ENCODE measurements at regions of chr9 and their contacts with region 1.

Region 1: GRCh38 chr9:72364679-72365524 is at the start of gene ZFAND5:
- DNase-seq: peak; percentile 96 to 97 (median 97)
- H3K4me3 ChIP-seq: peak within 1 kb of the TSS; percentile 77 to 100 (median 98)
- H3K4me3 Mint-ChIP-seq: peak within 1 kb of the TSS; percentile 95 to 96
- H3K27ac ChIP-seq: peak within 1 kb of the TSS; percentile 97 to 100
- H3K27ac Mint-ChIP-seq: peak within 1 kb of the TSS; percentile 100
- H3K4me1 ChIP-seq: peaks cover 27 to 35% of the 10 kb centered on the region in 2 donors
- H3K4me1 Mint-ChIP-seq: peaks cover 20% of the 10 kb centered on the region
- H3K27me3 ChIP-seq: no peaks in the 10 kb centered on the region
- H3K27me3 Mint-ChIP-seq: peaks cover 0 to 4% (median 0%) of the 10 kb centered on the region in 3 donors
- CTCF ChIP-seq: no peak
- polyA plus RNA-seq, gene ZFAND5: 199 to 702 (median 237) TPM

Region 2: GRCh38 chr9:72292256-72292682 is 72.6 kb before region 1 on chr9:
- intact Hi-C with region 1: loop called in 1 of 2 experiments (anchors 2 kb)
- DNase-seq: peak; percentile 38 to 68 (median 53)
- H3K4me3 ChIP-seq: peak overlapping the region in 2 of 3 experiments; percentile 27 to 50
- H3K4me3 Mint-ChIP-seq: peak overlapping the region; percentile 1 to 56
- H3K27ac ChIP-seq: peak overlapping the region; percentile 1 to 85
- H3K27ac Mint-ChIP-seq: peak overlapping the region; percentile 85 to 94 (median 91)
- H3K4me1 ChIP-seq: peaks cover 43 to 49% of the 10 kb centered on the region in 2 donors
- H3K4me1 Mint-ChIP-seq: peaks cover 42% of the 10 kb centered on the region
- H3K27me3 ChIP-seq: no peaks in the 10 kb centered on the region
- H3K27me3 Mint-ChIP-seq: peaks cover 0 to 1% (median 0%) of the 10 kb centered on the region in 3 donors
- CTCF ChIP-seq: peak; percentile 80

Region 3: GRCh38 chr9:72394066-72394465 is 29.2 kb after region 1 on chr9:
- intact Hi-C with region 1: loop called in 1 of 2 experiments (anchors 2 kb)
- DNase-seq: peak; percentile 55 to 79 (median 55)
- H3K4me3 ChIP-seq: peak overlapping the region in 1 of 3 experiments; percentile 31
- H3K4me3 Mint-ChIP-seq: no peak overlapping the region
- H3K27ac ChIP-seq: peak overlapping the region in 1 of 2 donors; percentile 82
- H3K27ac Mint-ChIP-seq: peak overlapping the region; percentile 79 to 94 (median 88)
- H3K4me1 ChIP-seq: peaks cover 46 to 48% of the 10 kb centered on the region in 2 donors
- H3K4me1 Mint-ChIP-seq: peaks cover 40% of the 10 kb centered on the region
- H3K27me3 ChIP-seq: no peaks in the 10 kb centered on the region
- H3K27me3 Mint-ChIP-seq: peaks cover 0 to 3% (median 0%) of the 10 kb centered on the region in 3 donors
- CTCF ChIP-seq: no peak

Region 4: DNA sequence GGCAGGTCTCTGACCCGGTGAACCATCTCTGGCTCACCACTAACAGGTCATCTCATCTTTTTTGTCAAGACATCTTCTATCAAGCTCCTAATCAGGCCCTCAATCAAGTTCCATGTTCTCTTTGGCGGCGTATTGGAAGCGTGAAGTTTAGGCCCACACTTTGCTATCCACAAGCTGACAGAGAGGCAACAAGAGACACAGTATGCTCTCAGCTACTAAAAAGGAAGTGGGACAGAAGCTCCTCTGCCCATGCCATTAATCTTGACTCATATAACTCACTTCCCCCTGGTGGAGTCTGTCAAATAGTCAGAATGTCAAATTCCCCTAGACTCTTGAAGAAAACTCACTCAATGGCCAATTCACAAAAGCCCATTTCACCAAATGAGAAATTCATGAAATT is 79.0 kb after region 1 on chr9:
- intact Hi-C with region 1: loop called (anchors 2 kb)
- DNase-seq: peak; percentile 86 to 95 (median 94)
- H3K4me3 ChIP-seq: peak overlapping the region in 1 of 3 experiments; percentile 54
- H3K4me3 Mint-ChIP-seq: no peak overlapping the region
- H3K27ac ChIP-seq: peak overlapping the region; percentile 79 to 90
- H3K27ac Mint-ChIP-seq: peak overlapping the region; percentile 93 to 98 (median 97)
- H3K4me1 ChIP-seq: peaks cover 82 to 84% of the 10 kb centered on the region in 2 donors
- H3K4me1 Mint-ChIP-seq: peaks cover 74% of the 10 kb centered on the region
- H3K27me3 ChIP-seq: no peaks in the 10 kb centered on the region
- H3K27me3 Mint-ChIP-seq: no peaks in the 10 kb centered on the region
- CTCF ChIP-seq: peak; percentile 25

Region 5: GRCh38 chr9:72526901-72527800 is 162.2 kb after region 1 on chr9:
- intact Hi-C with region 1: loop called in 1 of 2 experiments (anchors 5 kb)
- DNase-seq: peak; percentile 85 to 92 (median 85)
- H3K4me3 ChIP-seq: peak overlapping the region; percentile 29 to 69 (median 41)
- H3K4me3 Mint-ChIP-seq: peak overlapping the region; percentile 70 to 97
- H3K27ac ChIP-seq: peak overlapping the region; percentile 81 to 95
- H3K27ac Mint-ChIP-seq: peak overlapping the region; percentile 90 to 98 (median 93)
- H3K4me1 ChIP-seq: peaks cover 29 to 33% of the 10 kb centered on the region in 2 donors
- H3K4me1 Mint-ChIP-seq: peaks cover 32% of the 10 kb centered on the region
- H3K27me3 ChIP-seq: no peaks in the 10 kb centered on the region
- H3K27me3 Mint-ChIP-seq: peaks cover 0 to 2% (median 0%) of the 10 kb centered on the region in 3 donors
- CTCF ChIP-seq: no peak

Region 6: GRCh38 chr9:72577212-72577753 is 212.4 kb after region 1 on chr9:
- intact Hi-C with region 1: no loop called
- DNase-seq: peak in 1 of 3 donors; percentile 52
- H3K4me3 ChIP-seq: no peak overlapping the region
- H3K4me3 Mint-ChIP-seq: no peak overlapping the region
- H3K27ac ChIP-seq: no peak overlapping the region
- H3K27ac Mint-ChIP-seq: peak overlapping the region in 2 of 7 donors; percentile 4 to 10
- H3K4me1 ChIP-seq: peaks cover 7 to 9% of the 10 kb centered on the region in 2 donors
- H3K4me1 Mint-ChIP-seq: peaks cover 14% of the 10 kb centered on the region
- H3K27me3 ChIP-seq: no peaks in the 10 kb centered on the region
- H3K27me3 Mint-ChIP-seq: peaks cover 1 to 3% (median 2%) of the 10 kb centered on the region in 3 donors
- CTCF ChIP-seq: no peak

Region 7: GRCh38 chr9:72952914-72953313 is 588.0 kb after region 1 on chr9 and contains the start of gene ALDH1A1:
- intact Hi-C with region 1: no loop called
- DNase-seq: peak; percentile 18 to 62 (median 49)
- H3K4me3 ChIP-seq: peak within 1 kb of the TSS; percentile 50 to 74 (median 73)
- H3K4me3 Mint-ChIP-seq: peak within 1 kb of the TSS; percentile 65 to 93
- H3K27ac ChIP-seq: peak within 1 kb of the TSS in 1 of 2 donors; percentile 78
- H3K27ac Mint-ChIP-seq: peak within 1 kb of the TSS; percentile 81 to 95 (median 88)
- H3K4me1 ChIP-seq: peaks cover 67 to 77% of the 10 kb centered on the region in 2 donors
- H3K4me1 Mint-ChIP-seq: peaks cover 81% of the 10 kb centered on the region
- H3K27me3 ChIP-seq: no peaks in the 10 kb centered on the region
- H3K27me3 Mint-ChIP-seq: no peaks in the 10 kb centered on the region
- CTCF ChIP-seq: no peak
- polyA plus RNA-seq, gene ALDH1A1: 28.6 to 117 (median 105) TPM